ENCODE measurements at regions of chr6 and their contacts with region 1.

Region 1: GRCh38 chr6:15691250-15691869 is 28.5 kb upstream of the DTNBP1 start:
- DNase-seq: peak; percentile 82 to 88 (median 84)
- H3K4me3 ChIP-seq: peak overlapping the region; percentile 26
- H3K27ac ChIP-seq: no peak overlapping the region
- H3K4me1 ChIP-seq: no peaks in the 10 kb centered on the region
- H3K27me3 ChIP-seq: no peaks in the 10 kb centered on the region
- CTCF ChIP-seq: peak; percentile 95 to 99 (median 97)
- EP300 ChIP-seq: no peak
- POLR2A ChIP-seq: no peak

Region 2: GRCh38 chr6:16128759-16129622 is 437.6 kb after region 1 on chr6 and contains the start of gene MYLIP:
- intact Hi-C with region 1: loop called in 2 of 4 experiments (anchors 5 to 10 kb)
- DNase-seq: peak; percentile 97 to 98 (median 98)
- H3K4me3 ChIP-seq: peak within 1 kb of the TSS; percentile 96
- H3K27ac ChIP-seq: peak within 1 kb of the TSS; percentile 70 to 96
- H3K4me1 ChIP-seq: peaks cover 3% of the 10 kb centered on the region
- H3K27me3 ChIP-seq: no peaks in the 10 kb centered on the region
- CTCF ChIP-seq: peak; percentile 59 to 73 (median 67)
- EP300 ChIP-seq: no peak
- POLR2A ChIP-seq: peak; percentile 96
- total RNA-seq, gene MYLIP: 11.0 to 45.4 (median 34.3) TPM

Region 3: DNA sequence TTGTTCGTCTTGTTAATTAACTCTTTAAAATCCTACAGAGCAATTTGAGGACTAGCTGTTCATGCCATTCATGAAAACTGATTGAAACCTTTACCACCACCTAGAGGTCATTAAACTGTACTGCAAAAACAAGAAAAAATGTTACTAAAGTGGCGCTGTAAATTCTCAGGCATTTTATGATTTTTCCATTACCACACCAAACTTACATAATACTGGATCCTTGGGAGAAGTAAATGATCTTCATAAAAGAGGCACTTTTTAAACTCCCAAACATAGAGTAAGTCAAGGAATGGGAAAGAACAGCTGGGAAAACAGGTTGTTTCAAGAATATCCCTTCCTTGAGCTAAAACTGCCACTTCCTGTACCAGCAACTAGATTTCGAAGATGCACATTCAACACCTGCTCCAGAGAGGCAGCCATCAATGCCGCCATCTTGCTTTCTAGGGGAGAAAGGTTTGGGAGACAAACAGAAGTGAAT is 491.9 kb after region 1 on chr6:
- intact Hi-C with region 1: loop called in 2 of 4 experiments (anchors 5 to 10 kb)
- DNase-seq: no peak
- H3K4me3 ChIP-seq: no peak overlapping the region
- H3K27ac ChIP-seq: no peak overlapping the region
- H3K4me1 ChIP-seq: peaks cover 2% of the 10 kb centered on the region
- H3K27me3 ChIP-seq: no peaks in the 10 kb centered on the region
- CTCF ChIP-seq: peak in 2 of 3 donors; percentile 61 to 68
- EP300 ChIP-seq: no peak
- POLR2A ChIP-seq: no peak

Region 4: DNA sequence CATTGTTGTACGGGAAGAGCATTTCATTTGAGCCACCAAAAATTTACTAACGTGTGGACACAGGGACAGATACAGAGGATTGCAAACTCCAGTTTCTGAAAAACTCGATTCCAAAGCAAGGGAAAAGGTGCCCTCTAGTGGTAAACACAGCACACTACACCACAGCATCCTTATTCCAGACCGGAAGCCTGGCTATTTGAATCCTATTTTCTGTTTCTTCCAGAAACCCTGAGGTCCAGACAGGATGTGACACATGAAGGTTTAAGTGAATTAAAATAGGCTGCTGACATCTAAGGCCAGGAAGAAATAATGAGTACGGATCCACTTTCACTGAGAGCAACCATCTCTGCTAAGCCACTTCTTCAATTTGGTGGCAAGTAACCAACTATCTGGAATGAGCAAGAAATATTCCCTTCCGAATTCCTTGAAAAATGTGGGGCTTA is 515.3 kb after region 1 on chr6:
- intact Hi-C with region 1: loop called in 2 of 4 experiments (anchors 2 to 5 kb)
- DNase-seq: peak in 4 of 5 donors; percentile 47 to 78 (median 55)
- H3K4me3 ChIP-seq: no peak overlapping the region
- H3K27ac ChIP-seq: no peak overlapping the region
- H3K4me1 ChIP-seq: peaks cover 7% of the 10 kb centered on the region
- H3K27me3 ChIP-seq: no peaks in the 10 kb centered on the region
- CTCF ChIP-seq: peak; percentile 85 to 90 (median 86)
- EP300 ChIP-seq: no peak
- POLR2A ChIP-seq: no peak

Region 5: GRCh38 chr6:16602035-16602434 is 910.7 kb after region 1 on chr6:
- intact Hi-C with region 1: no loop called
- DNase-seq: no peak
- H3K4me3 ChIP-seq: no peak overlapping the region
- H3K27ac ChIP-seq: no peak overlapping the region
- H3K4me1 ChIP-seq: no peaks in the 10 kb centered on the region
- H3K27me3 ChIP-seq: no peaks in the 10 kb centered on the region
- CTCF ChIP-seq: no peak
- EP300 ChIP-seq: no peak
- POLR2A ChIP-seq: no peak

Measured in ovary (tissue), 10 donors.